ENCODE measurements at regions of chr4 and their contacts with region 1.

Region 1: DNA sequence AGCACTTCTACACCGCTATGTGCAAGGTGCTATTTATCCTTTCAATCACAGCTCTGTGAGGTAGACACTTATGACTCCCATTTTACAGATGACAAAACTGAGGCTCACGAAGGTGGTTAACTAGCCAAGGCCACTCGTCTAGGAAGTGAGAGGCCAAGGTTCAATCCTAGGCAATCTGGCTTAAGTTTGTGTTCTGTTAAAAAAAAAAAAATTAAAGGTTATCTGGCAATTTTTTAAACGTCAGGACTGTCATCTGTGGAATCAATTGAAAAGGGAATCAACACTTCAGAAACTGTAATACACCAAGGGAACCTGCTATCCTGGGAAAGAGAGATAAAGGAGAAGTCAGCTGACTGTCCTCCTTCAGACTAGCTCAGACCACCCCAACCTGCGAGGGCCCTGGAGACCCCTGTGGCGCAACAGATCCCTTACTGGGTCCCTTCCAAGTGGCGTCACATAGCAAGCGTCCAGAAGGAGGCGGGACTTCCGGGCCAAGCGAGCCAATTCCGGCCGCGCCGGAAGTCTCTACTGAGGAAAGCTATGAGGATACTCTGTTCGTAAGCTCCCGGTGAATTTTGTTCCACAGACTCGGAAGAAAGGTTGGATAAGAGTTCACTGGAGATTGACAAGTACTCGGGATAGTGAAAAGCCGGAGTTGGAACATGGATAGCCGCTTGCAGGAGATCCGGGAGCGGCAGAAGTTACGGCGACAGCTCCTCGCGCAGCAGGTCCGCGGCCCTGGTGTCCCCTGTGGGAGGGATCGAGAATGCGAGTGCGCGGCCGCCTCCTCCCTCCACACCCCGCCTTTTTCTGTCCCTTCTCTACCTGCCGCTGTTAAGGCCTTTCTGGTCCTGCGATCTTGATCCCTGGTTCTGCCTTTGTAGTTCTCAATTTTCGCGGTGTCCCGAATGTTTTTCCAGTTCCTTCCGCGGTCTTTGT is at the start of gene METTL14:
- H3K4me3 Mint-ChIP-seq: peak within 1 kb of the TSS; percentile 96
- H3K27ac Mint-ChIP-seq: peak within 1 kb of the TSS; percentile 90
- H3K4me1 Mint-ChIP-seq: no peaks in the 10 kb centered on the region
- H3K27me3 Mint-ChIP-seq: peaks cover 2% of the 10 kb centered on the region

Region 2: DNA sequence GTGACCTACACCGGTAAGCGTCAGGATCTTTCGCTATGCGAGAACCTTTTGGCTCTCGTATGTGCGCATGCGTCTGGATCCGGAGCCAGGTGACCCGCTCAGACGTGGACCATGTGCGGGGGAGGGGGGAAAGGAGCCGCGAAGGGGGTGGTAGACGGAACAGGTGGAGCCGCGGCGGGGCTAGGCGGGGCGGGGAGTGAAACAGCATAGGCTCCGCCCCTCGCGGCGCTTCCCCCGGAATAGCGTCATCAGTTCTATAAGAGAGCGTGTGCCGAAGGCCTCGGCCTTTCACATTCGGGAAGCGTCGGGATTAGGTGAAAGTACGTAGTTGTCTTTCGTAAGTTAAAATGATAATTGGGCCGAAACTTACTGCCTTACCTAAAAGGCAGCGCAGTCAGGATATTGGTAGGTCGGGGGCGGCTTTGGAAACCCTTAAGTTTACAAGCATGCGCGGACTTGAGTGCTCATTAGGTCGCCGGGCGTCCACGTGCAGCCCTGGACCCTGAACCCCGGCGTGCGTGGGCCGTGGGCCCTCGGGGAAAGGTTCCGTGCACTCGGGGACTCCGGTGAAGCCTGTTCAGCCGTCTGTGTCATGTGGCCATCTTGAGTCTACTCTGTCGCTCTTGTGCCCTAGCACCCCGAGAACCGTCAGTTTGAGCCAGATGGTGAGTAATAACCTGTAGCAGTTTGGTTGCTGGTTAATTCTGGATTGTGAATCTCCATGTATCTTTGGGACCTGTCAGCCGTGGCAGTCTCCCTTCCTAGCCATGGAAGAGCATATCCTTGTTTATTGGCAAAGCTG is 406.5 kb before region 1 on chr4:
- intact Hi-C with region 1: loop called (anchors 5 kb)
- H3K4me3 Mint-ChIP-seq: peak overlapping the region; percentile 93
- H3K27ac Mint-ChIP-seq: peak overlapping the region; percentile 99
- H3K4me1 Mint-ChIP-seq: peaks cover 47% of the 10 kb centered on the region
- H3K27me3 Mint-ChIP-seq: no peaks in the 10 kb centered on the region

Region 3: GRCh38 chr4:118586357-118586790 is 98.8 kb before region 1 on chr4:
- intact Hi-C with region 1: loop called (anchors 1 kb)
- H3K4me3 Mint-ChIP-seq: no peak overlapping the region
- H3K27ac Mint-ChIP-seq: no peak overlapping the region
- H3K4me1 Mint-ChIP-seq: peaks cover 43% of the 10 kb centered on the region
- H3K27me3 Mint-ChIP-seq: peaks cover 36% of the 10 kb centered on the region

Region 4: GRCh38 chr4:118716304-118716703 is 31.2 kb after region 1 on chr4:
- intact Hi-C with region 1: no loop called
- H3K4me3 Mint-ChIP-seq: no peak overlapping the region
- H3K27ac Mint-ChIP-seq: no peak overlapping the region
- H3K4me1 Mint-ChIP-seq: no peaks in the 10 kb centered on the region
- H3K27me3 Mint-ChIP-seq: no peaks in the 10 kb centered on the region

Region 5: GRCh38 chr4:118776157-118776954 is 91.2 kb after region 1 on chr4:
- intact Hi-C with region 1: no loop called
- H3K4me3 Mint-ChIP-seq: no peak overlapping the region
- H3K27ac Mint-ChIP-seq: no peak overlapping the region
- H3K4me1 Mint-ChIP-seq: no peaks in the 10 kb centered on the region
- H3K27me3 Mint-ChIP-seq: no peaks in the 10 kb centered on the region

Region 6: DNA sequence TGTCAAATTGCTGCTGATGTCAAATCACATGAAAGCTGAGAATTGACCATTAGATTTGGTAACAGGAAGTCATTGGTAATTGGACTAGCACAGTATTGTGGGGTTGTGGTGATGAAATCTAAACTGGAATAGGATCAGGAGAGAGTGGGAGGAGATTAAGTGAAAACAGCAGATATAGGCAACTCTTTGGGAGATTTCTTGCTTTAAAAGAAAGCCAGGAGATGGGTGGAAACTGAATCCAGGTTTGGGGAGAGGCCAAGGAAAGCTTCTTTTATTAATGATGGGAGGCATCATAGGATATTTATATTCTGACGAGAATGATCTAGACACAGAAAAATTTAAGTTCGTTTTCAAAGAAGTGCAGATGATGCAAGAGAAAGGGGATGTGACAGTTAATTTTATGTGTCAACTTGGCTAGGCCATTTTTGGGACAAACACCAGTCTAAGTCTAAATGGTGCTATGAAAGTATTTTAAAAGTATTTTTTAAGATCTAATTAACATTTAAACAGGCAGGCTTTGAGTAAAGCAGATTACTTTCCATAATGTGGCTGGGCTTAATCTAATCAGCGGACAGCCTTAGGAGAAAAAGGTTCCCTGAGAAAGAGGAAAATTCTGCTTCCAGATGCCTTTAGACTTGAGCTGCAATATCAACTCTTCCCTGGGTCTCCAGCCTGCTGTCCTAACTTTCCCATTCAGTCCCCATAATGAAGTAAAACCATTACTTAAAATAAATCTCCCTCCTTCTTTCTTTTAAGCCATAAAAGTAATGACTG is 126.0 kb after region 1 on chr4:
- intact Hi-C with region 1: loop called (anchors 10 kb)
- H3K4me3 Mint-ChIP-seq: no peak overlapping the region
- H3K27ac Mint-ChIP-seq: no peak overlapping the region
- H3K4me1 Mint-ChIP-seq: peaks cover 9% of the 10 kb centered on the region
- H3K27me3 Mint-ChIP-seq: no peaks in the 10 kb centered on the region

Region 7: DNA sequence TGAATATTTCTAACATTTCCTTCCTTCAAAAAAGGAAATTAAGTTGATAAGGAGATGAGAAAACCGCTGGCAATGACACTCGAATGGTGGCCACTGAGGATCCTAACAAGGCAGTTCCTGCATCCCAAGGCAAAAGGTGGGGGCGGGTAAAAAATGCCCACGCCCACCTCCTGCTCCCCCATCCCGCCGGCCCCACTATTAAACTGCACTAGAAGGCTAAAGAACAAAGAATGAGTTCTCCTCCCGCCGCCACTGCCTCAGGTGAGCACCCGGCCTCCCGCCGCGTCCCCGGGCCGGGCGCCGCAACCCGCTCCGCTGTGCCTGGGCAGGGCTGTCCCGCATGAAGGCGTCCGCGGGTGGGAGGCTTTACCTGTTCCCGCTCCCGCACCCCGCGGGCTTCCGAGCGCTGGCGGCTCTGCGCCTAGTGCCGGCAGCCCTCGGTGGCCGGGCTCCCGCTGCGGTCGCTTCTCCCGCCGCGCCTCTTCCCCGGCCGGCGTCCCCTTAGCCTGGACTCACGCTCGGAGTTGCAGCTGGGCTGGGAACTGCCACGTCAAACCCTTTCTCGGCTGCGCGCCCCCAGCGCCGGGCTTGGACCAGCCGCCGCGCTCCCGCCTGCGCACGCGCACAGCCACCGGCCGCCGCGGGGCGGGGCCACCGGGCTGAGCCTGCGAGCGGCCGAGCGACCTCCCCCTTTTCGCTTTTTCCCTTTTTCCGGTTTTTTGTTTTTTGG is 150.6 kb after region 1 on chr4 and contains the start of gene SEC24D:
- intact Hi-C with region 1: loop called (anchors 2 kb)
- H3K4me3 Mint-ChIP-seq: peak within 1 kb of the TSS; percentile 100
- H3K27ac Mint-ChIP-seq: peak within 1 kb of the TSS; percentile 87
- H3K4me1 Mint-ChIP-seq: peaks cover 28% of the 10 kb centered on the region
- H3K27me3 Mint-ChIP-seq: peaks cover 3% of the 10 kb centered on the region

Region 8: DNA sequence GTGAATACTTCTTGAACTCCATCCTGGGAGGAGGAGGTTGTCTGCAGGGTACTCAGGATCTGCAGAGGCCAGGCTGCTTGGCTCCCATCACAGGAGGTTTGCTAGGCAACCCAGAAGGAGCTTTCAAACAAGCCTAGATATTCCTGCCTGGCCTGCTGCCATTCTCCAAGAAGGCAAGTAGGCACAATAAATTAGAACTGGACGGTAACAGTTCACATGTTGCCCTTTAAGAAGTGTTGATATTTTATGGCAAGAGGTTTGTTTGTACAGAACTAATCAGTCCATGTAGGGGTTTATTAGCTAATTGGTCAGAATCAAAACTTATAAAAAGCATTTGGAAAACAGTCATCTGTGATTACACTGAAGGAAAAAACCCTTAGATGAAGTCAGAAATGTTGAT is 242.8 kb after region 1 on chr4:
- intact Hi-C with region 1: no loop called
- H3K4me3 Mint-ChIP-seq: no peak overlapping the region
- H3K27ac Mint-ChIP-seq: no peak overlapping the region
- H3K4me1 Mint-ChIP-seq: no peaks in the 10 kb centered on the region
- H3K27me3 Mint-ChIP-seq: no peaks in the 10 kb centered on the region